Mammary epithelial cell (primary cell): ENCODE measurements at regions of chr2 and their contacts with region 1.

Region 1: GRCh38 chr2:64330281-64331113 is 123.5 kb upstream of the LGALSL start:
- DNase-seq: peak; percentile 55
- H3K4me3 ChIP-seq: peak overlapping the region in 1 of 3 experiments; percentile 31
- H3K27ac ChIP-seq: no peak overlapping the region
- H3K4me1 ChIP-seq: peaks cover 10% of the 10 kb centered on the region
- H3K27me3 ChIP-seq: no peaks in the 10 kb centered on the region
- CTCF ChIP-seq: peak; percentile 86 to 92

Region 2: GRCh38 chr2:64144057-64145013 is 186.2 kb before region 1 on chr2 and contains the start of gene PELI1:
- CTCF ChIA-PET with region 1: no interaction called
- dilution Hi-C with region 1: no loop called
- in situ Hi-C with region 1: no loop called
- intact Hi-C with region 1: loop called (anchors 5 kb)
- DNase-seq: peak; percentile 99
- H3K4me3 ChIP-seq: peak within 1 kb of the TSS; percentile 92 to 96 (median 94)
- H3K27ac ChIP-seq: peak within 1 kb of the TSS; percentile 94
- H3K4me1 ChIP-seq: peaks cover 12% of the 10 kb centered on the region
- H3K27me3 ChIP-seq: no peaks in the 10 kb centered on the region
- CTCF ChIP-seq: peak in 1 of 2 donors; percentile 41
- total RNA-seq, gene PELI1: 18.9 to 26.7 TPM

Region 3: GRCh38 chr2:64453770-64454385 is 123.4 kb after region 1 on chr2 and contains the start of gene LGALSL:
- CTCF ChIA-PET with region 1: no interaction called
- dilution Hi-C with region 1: no loop called
- in situ Hi-C with region 1: no loop called
- intact Hi-C with region 1: loop called (anchors 1 kb)
- DNase-seq: peak; percentile 71
- H3K4me3 ChIP-seq: peak within 1 kb of the TSS; percentile 67 to 78 (median 68)
- H3K27ac ChIP-seq: peak within 1 kb of the TSS; percentile 91
- H3K4me1 ChIP-seq: peaks cover 23% of the 10 kb centered on the region
- H3K27me3 ChIP-seq: no peaks in the 10 kb centered on the region
- CTCF ChIP-seq: no peak
- total RNA-seq, gene LGALSL: 11.8 to 23.3 TPM

Region 4: GRCh38 chr2:64488050-64488974 is 157.8 kb after region 1 on chr2:
- CTCF ChIA-PET with region 1: interaction called, 12 read pairs
- dilution Hi-C with region 1: loop called (anchors 5 kb)
- in situ Hi-C with region 1: loop called (anchors 5 kb)
- intact Hi-C with region 1: loop called (anchors 1 kb)
- DNase-seq: peak; percentile 48
- H3K4me3 ChIP-seq: no peak overlapping the region
- H3K27ac ChIP-seq: no peak overlapping the region
- H3K4me1 ChIP-seq: peaks cover 20% of the 10 kb centered on the region
- H3K27me3 ChIP-seq: no peaks in the 10 kb centered on the region
- CTCF ChIP-seq: peak; percentile 85 to 93

Region 5: DNA sequence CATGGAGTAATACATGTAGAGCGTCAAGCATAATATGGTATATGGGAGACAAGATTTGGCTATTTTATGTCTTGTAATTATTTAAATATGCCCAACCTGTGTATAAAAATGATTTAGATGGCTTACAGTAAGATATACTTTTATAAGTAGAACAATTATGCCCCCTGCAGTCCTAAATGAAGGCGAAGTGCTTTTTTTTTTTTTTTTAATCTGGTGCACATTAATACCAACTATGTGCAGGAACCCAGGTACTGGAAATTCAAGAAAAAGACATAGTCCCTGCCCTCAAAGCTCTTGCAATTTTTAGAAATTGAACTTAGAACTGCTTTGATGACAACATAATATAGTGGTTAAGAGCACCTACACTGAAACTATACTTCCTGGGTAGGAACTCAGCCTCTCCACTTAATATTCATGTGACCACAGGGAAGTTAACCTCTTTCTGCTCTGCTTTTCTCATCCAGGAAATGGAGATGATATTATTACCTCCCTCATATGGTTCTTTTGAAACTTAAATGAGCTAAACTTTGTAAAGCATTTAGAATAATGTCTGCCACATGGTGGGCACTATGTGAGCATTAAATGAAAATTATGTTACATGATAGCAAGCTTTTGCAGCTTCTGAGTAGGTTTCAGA is 231.8 kb after region 1 on chr2:
- CTCF ChIA-PET with region 1: interaction called, 3 read pairs
- dilution Hi-C with region 1: no loop called
- in situ Hi-C with region 1: loop called in 1 of 2 experiments (anchors 25 kb)
- intact Hi-C with region 1: loop called (anchors 1 kb)
- DNase-seq: no peak
- H3K4me3 ChIP-seq: no peak overlapping the region
- H3K27ac ChIP-seq: no peak overlapping the region
- H3K4me1 ChIP-seq: peaks cover 6% of the 10 kb centered on the region
- H3K27me3 ChIP-seq: no peaks in the 10 kb centered on the region
- CTCF ChIP-seq: peak; percentile 29 to 30

Region 6: GRCh38 chr2:64873472-64873924 is 543.0 kb after region 1 on chr2:
- CTCF ChIA-PET with region 1: no interaction called
- dilution Hi-C with region 1: loop called (anchors 25 kb)
- in situ Hi-C with region 1: loop called in 1 of 2 experiments (anchors 5 kb)
- intact Hi-C with region 1: loop called (anchors 5 kb)
- DNase-seq: peak; percentile 36
- H3K4me3 ChIP-seq: peak overlapping the region in 1 of 3 experiments; percentile 11
- H3K27ac ChIP-seq: no peak overlapping the region
- H3K4me1 ChIP-seq: peaks cover 21% of the 10 kb centered on the region
- H3K27me3 ChIP-seq: no peaks in the 10 kb centered on the region
- CTCF ChIP-seq: peak; percentile 90 to 91